ENCODE measurements at regions of chr12 and their contacts with region 1.

Region 1: GRCh38 chr12:103930034-103930786 is at the start of gene HSP90B1:
- DNase-seq: peak; percentile 99
- ATAC-seq: peak; percentile 92 to 95 (median 94)
- H3K4me3 ChIP-seq: peak within 1 kb of the TSS; percentile 87
- H3K27ac ChIP-seq: peak within 1 kb of the TSS; percentile 95
- H3K4me1 ChIP-seq: peaks cover 31% of the 10 kb centered on the region
- H3K27me3 ChIP-seq: no peaks in the 10 kb centered on the region
- CTCF ChIP-seq: no peak
- total RNA-seq, gene HSP90B1: 85.7 to 137 (median 126) TPM

Region 2: GRCh38 chr12:103441437-103442181 is 488.6 kb before region 1 on chr12:
- intact Hi-C with region 1: no loop called
- DNase-seq: no peak
- ATAC-seq: no peak
- H3K4me3 ChIP-seq: no peak overlapping the region
- H3K27ac ChIP-seq: no peak overlapping the region
- H3K4me1 ChIP-seq: no peaks in the 10 kb centered on the region
- H3K27me3 ChIP-seq: no peaks in the 10 kb centered on the region
- CTCF ChIP-seq: no peak

Region 3: DNA sequence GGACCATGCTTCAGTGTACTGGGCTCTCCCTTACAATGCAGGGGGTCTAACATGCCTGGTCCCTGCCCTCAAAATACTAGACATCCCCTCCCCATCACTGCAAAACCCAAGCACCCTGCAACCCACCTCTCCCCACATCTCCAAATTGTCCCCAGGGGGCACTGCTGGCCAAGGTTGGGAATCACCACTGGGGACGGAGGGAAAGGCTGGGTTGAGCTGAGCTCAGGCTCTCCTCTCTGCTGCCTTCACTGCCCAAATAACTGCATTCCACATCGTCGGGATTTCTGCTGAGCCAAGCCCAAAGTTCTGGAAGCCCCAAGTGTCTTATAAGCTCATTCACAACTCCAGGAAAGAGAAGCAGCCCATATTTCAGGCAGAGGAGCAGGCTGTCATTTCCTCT is 158.7 kb before region 1 on chr12:
- intact Hi-C with region 1: loop called in 1 of 2 experiments (anchors 5 kb)
- DNase-seq: peak; percentile 27 to 60
- ATAC-seq: peak; percentile 72 to 94 (median 82)
- H3K4me3 ChIP-seq: no peak overlapping the region
- H3K27ac ChIP-seq: no peak overlapping the region
- H3K4me1 ChIP-seq: peaks cover 6% of the 10 kb centered on the region
- H3K27me3 ChIP-seq: no peaks in the 10 kb centered on the region
- CTCF ChIP-seq: peak; percentile 52

Region 4: DNA sequence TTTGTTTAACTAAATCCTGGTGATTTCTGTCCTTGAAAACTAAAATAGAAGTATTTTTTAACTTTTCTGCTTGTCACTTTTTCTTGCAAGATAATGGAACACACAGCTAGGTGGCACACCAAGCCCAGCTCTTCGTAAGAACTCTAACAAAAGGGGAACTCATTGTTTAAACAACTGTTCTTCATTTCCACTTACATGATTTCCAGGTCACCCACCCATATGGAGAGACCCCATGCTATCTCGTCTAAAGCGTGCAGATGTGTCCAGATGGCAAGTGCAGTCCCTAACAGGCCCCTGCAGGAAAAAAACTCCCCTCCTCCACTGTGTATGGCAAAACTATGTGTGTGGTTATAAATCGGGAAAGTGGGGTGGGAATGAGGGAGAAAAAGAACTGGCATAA is 45.9 kb before region 1 on chr12:
- intact Hi-C with region 1: loop called (anchors 5 kb)
- DNase-seq: no peak
- ATAC-seq: peak in 1 of 4 donors; percentile 54
- H3K4me3 ChIP-seq: no peak overlapping the region
- H3K27ac ChIP-seq: no peak overlapping the region
- H3K4me1 ChIP-seq: no peaks in the 10 kb centered on the region
- H3K27me3 ChIP-seq: no peaks in the 10 kb centered on the region
- CTCF ChIP-seq: peak; percentile 44

Region 5: GRCh38 chr12:103965590-103966504 is 35.6 kb after region 1 on chr12 and contains the start of gene TDG:
- intact Hi-C with region 1: loop called in 1 of 2 experiments (anchors 5 kb)
- DNase-seq: peak; percentile 99
- ATAC-seq: peak; percentile 99
- H3K4me3 ChIP-seq: peak within 1 kb of the TSS; percentile 92
- H3K27ac ChIP-seq: peak within 1 kb of the TSS; percentile 97
- H3K4me1 ChIP-seq: peaks cover 47% of the 10 kb centered on the region
- H3K27me3 ChIP-seq: no peaks in the 10 kb centered on the region
- CTCF ChIP-seq: no peak
- total RNA-seq, gene TDG: 5.5 to 15.5 (median 11.8) TPM

Region 6: GRCh38 chr12:105107494-105108371 is 1177.5 kb after region 1 on chr12 and contains the start of gene WASHC4:
- intact Hi-C with region 1: loop called in 1 of 2 experiments (anchors 10 kb)
- DNase-seq: peak; percentile 96 to 97
- ATAC-seq: peak; percentile 99 to 100 (median 99)
- H3K4me3 ChIP-seq: peak within 1 kb of the TSS; percentile 96
- H3K27ac ChIP-seq: peak within 1 kb of the TSS; percentile 97
- H3K4me1 ChIP-seq: peaks cover 29% of the 10 kb centered on the region
- H3K27me3 ChIP-seq: no peaks in the 10 kb centered on the region
- CTCF ChIP-seq: no peak
- total RNA-seq, gene WASHC4: 21.8 to 32.6 (median 28.0) TPM